CD8-positive, alpha-beta memory T cell (primary cell): ENCODE measurements at regions of chr3 and their contacts with region 1.

Region 1: DNA sequence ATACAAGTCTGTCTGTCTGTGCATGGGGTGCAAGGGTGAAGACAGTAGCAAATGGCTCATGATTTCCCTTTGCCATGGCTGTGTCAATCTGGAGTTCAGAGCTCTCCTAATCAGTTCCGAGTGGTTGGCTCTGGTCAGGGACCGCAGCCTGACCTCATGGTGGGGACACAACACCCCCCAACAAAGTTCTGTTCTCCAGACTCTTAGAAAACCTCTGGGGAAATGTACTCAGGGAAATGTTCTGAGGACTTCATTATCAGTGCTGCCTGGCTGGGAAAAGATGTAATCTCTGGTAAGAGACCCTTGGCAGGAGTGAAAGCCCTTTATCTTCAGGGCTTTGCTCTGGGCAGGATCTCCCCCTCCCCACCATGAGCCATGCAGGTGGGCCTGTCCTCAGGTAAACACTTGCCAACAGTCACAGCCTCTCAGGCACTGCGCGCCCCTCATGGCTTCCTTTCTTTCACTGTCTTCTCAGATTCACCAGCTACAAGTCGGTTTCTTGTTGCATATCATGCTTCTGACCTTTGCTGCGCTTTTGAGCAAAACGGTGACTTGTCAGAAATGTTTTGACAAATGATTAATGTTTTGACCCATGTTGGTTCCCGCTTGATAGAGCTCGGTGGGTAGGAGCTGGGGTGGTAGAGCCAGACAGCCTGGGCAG is 95.5 kb downstream of the ST6GAL1 start:
- DNase-seq: peak in 1 of 5 donors; percentile 46
- H3K4me3 ChIP-seq: peak overlapping the region; percentile 64
- H3K4me3 Mint-ChIP-seq: peak overlapping the region; percentile 79 to 92 (median 84)
- H3K27ac ChIP-seq: peak overlapping the region; percentile 49
- H3K27ac Mint-ChIP-seq: peak overlapping the region; percentile 82 to 97 (median 89)
- H3K4me1 ChIP-seq: peaks cover 74% of the 10 kb centered on the region
- H3K4me1 Mint-ChIP-seq: peaks cover 68 to 81% (median 78%) of the 10 kb centered on the region in 3 donors
- H3K27me3 ChIP-seq: no peaks in the 10 kb centered on the region
- H3K27me3 Mint-ChIP-seq: no peaks in the 10 kb centered on the region

Region 2: GRCh38 chr3:187041362-187042307 is 15.8 kb after region 1 on chr3:
- CTCF ChIA-PET with region 1: interaction called, 15 read pairs
- POLR2A ChIA-PET with region 1: interaction called, 15 read pairs
- DNase-seq: peak in 4 of 5 donors; percentile 21 to 69 (median 58)
- H3K4me3 ChIP-seq: peak overlapping the region; percentile 37
- H3K4me3 Mint-ChIP-seq: peak overlapping the region; percentile 19 to 74 (median 68)
- H3K27ac ChIP-seq: peak overlapping the region; percentile 65
- H3K27ac Mint-ChIP-seq: peak overlapping the region; percentile 84 to 98 (median 94)
- H3K4me1 ChIP-seq: peaks cover 86% of the 10 kb centered on the region
- H3K4me1 Mint-ChIP-seq: peaks cover 71 to 84% (median 83%) of the 10 kb centered on the region in 3 donors
- H3K27me3 ChIP-seq: no peaks in the 10 kb centered on the region
- H3K27me3 Mint-ChIP-seq: no peaks in the 10 kb centered on the region

Region 3: GRCh38 chr3:187066228-187066995 is 40.6 kb after region 1 on chr3:
- CTCF ChIA-PET with region 1: interaction called, 10 read pairs
- POLR2A ChIA-PET with region 1: interaction called, 3 read pairs
- DNase-seq: peak; percentile 4 to 67 (median 43)
- H3K4me3 ChIP-seq: no peak overlapping the region
- H3K4me3 Mint-ChIP-seq: peak overlapping the region in 1 of 7 donors; percentile 25
- H3K27ac ChIP-seq: no peak overlapping the region
- H3K27ac Mint-ChIP-seq: peak overlapping the region; percentile 53 to 91 (median 78)
- H3K4me1 ChIP-seq: peaks cover 40% of the 10 kb centered on the region
- H3K4me1 Mint-ChIP-seq: peaks cover 62 to 74% (median 69%) of the 10 kb centered on the region in 3 donors
- H3K27me3 ChIP-seq: no peaks in the 10 kb centered on the region
- H3K27me3 Mint-ChIP-seq: no peaks in the 10 kb centered on the region

Region 4: GRCh38 chr3:187120326-187120725 is 94.5 kb after region 1 on chr3:
- CTCF ChIA-PET with region 1: no interaction called
- POLR2A ChIA-PET with region 1: no interaction called
- DNase-seq: no peak
- H3K4me3 ChIP-seq: no peak overlapping the region
- H3K4me3 Mint-ChIP-seq: no peak overlapping the region
- H3K27ac ChIP-seq: no peak overlapping the region
- H3K27ac Mint-ChIP-seq: no peak overlapping the region
- H3K4me1 ChIP-seq: no peaks in the 10 kb centered on the region
- H3K4me1 Mint-ChIP-seq: no peaks in the 10 kb centered on the region
- H3K27me3 ChIP-seq: no peaks in the 10 kb centered on the region
- H3K27me3 Mint-ChIP-seq: no peaks in the 10 kb centered on the region